Esophagus squamous epithelium (tissue), 5 donors: ENCODE measurements at regions of chr6 and their contacts with region 1.

Region 1: DNA sequence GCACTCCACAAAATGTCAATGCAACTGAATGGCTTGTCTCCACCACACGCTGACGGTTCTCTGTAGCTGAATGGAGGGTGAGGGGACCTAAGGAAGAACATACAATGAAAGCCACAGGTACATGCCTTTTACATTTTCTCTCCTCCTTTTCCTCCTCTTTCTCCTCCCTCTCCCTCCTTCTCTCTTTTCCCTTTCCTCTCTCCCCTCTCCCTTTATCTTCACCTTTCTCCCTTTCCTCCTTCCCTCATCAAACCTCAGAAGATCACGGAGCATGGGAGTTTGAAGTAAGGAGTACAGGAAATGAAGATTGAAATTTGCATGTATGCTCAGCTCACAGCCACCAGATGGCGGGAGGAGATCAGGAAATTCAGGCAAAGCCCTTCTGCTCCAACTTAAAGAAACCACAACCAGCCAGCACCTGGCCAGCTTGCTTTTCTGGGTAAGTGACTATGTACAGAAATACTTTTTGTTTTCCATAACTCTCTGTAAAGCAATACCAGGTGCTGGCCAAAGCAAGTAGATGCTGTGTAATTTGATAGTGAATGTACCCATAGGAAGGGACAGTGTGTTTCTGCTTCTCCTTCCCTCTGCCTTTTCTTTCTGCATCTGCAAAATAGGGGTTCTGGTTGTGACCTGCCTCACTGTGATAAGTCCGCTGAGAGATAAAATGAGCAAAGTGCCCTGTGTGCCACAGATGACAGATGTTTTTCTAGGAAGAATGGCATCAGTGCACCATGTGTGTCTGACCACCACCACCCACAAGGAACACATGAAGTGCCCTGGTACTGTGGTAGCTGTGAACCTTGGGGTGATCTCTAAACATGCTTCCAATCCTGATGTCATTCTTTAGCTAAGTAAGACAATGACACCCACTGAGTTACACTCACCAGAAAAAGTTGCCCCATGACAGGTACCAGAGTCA is 18.6 kb upstream of the FOXO3 start:
- DNase-seq: no peak
- H3K4me3 ChIP-seq: peak overlapping the region in 1 of 4 donors; percentile 23
- H3K27ac ChIP-seq: no peak overlapping the region
- H3K4me1 ChIP-seq: peaks cover 0 to 18% (median 6%) of the 10 kb centered on the region in 3 donors
- H3K27me3 ChIP-seq: no peaks in the 10 kb centered on the region
- CTCF ChIP-seq: peak; percentile 75 to 96 (median 90)
- POLR2A ChIP-seq: no peak

Region 2: GRCh38 chr6:108453597-108454185 is 88.4 kb before region 1 on chr6:
- intact Hi-C with region 1: no loop called
- DNase-seq: no peak
- H3K4me3 ChIP-seq: no peak overlapping the region
- H3K27ac ChIP-seq: peak overlapping the region in 1 of 4 donors; percentile 19
- H3K4me1 ChIP-seq: no peaks in the 10 kb centered on the region
- H3K27me3 ChIP-seq: no peaks in the 10 kb centered on the region
- CTCF ChIP-seq: no peak
- POLR2A ChIP-seq: no peak

Region 3: GRCh38 chr6:108497883-108498282 is 44.2 kb before region 1 on chr6:
- intact Hi-C with region 1: no loop called
- DNase-seq: no peak
- H3K4me3 ChIP-seq: no peak overlapping the region
- H3K27ac ChIP-seq: no peak overlapping the region
- H3K4me1 ChIP-seq: no peaks in the 10 kb centered on the region
- H3K27me3 ChIP-seq: no peaks in the 10 kb centered on the region
- CTCF ChIP-seq: peak in 4 of 6 experiments; percentile 21 to 58 (median 30)
- POLR2A ChIP-seq: no peak

Region 4: GRCh38 chr6:108661430-108661829 is 119.3 kb after region 1 on chr6:
- intact Hi-C with region 1: no loop called
- DNase-seq: no peak
- H3K4me3 ChIP-seq: no peak overlapping the region
- H3K27ac ChIP-seq: no peak overlapping the region
- H3K4me1 ChIP-seq: peaks cover 4 to 58% (median 24%) of the 10 kb centered on the region in 3 donors
- H3K27me3 ChIP-seq: no peaks in the 10 kb centered on the region
- CTCF ChIP-seq: no peak
- POLR2A ChIP-seq: no peak

Region 5: GRCh38 chr6:108755257-108756240 is 213.4 kb after region 1 on chr6:
- intact Hi-C with region 1: no loop called
- DNase-seq: no peak
- H3K4me3 ChIP-seq: no peak overlapping the region
- H3K27ac ChIP-seq: no peak overlapping the region
- H3K4me1 ChIP-seq: peaks cover 0 to 10% (median 0%) of the 10 kb centered on the region in 3 donors
- H3K27me3 ChIP-seq: no peaks in the 10 kb centered on the region
- CTCF ChIP-seq: no peak
- POLR2A ChIP-seq: no peak

Region 6: DNA sequence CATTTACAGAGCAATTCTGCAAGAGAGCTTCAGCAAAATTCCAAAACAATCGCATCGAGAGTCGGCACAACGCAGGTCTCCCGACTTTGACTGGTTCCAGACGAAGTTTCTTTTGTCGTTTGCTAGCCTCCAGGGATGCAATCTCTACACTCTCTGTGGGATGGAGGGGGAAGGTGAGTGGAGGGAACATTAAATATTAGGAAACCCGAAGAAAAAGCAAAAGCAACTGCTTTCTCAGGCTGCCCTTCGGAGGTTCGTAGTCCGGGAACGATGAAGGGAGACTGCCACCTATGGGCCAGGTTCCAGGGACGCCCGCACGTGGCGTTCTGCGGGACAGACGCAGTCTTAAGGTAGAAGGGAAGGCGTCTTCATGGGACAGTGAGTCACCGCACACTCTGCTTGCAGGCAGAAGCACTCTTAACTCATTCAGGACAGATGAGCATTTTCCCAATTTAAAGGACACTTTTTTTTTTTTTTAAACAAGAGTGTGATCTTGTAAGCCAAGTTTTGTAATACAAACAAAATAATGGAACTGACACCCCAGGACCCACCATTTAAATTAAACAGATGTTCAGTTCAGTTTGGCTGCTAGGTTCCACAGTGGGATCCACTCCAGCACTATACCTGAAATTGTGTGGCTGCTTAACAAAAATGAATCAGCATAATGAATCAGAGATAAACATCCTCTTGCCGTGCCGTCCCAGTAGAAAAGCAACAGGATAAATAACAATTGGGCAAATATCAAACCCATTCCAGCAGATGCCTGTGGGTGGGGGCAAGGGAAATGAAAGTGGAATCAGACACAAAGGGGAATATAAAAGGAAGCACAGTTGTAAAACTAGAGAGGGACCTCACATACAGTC is 240.3 kb after region 1 on chr6:
- intact Hi-C with region 1: loop called (anchors 5 kb)
- DNase-seq: no peak
- H3K4me3 ChIP-seq: peak overlapping the region; percentile 31 to 64 (median 52)
- H3K27ac ChIP-seq: peak overlapping the region in 3 of 4 donors; percentile 18 to 67 (median 62)
- H3K4me1 ChIP-seq: peaks cover 0 to 21% (median 5%) of the 10 kb centered on the region in 3 donors
- H3K27me3 ChIP-seq: no peaks in the 10 kb centered on the region
- CTCF ChIP-seq: peak; percentile 68 to 86 (median 80)
- POLR2A ChIP-seq: no peak

Region 7: DNA sequence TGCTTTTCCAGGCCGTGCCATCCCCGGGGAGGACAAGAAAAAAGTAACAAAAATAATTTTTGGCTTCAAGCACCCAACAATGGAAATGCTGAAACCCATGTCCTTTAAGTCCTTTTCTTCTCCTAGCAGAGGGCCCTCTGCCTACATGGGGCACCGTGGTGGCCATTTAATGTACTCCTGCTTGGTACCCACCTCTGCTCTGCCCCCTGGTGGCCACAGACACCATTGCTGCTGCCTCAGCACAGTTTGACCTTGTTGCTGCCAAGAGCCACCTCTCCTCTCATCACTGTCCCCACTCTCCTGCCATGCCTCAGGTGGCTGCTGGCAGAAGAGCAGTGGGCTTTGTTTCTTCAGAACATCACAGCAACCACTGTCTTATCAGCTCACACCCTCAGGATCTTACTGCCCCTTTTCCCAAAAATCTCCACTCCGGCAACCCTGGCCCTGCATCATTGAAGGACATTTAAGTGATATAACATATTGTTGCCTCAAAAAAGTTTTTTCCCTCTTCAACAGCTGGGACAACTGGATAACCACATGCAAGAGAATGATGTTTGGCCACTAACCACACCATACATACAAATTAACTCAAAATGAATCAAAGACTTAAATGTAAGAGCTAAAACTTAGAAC is 293.2 kb after region 1 on chr6:
- intact Hi-C with region 1: loop called (anchors 5 kb)
- DNase-seq: peak; percentile 35
- H3K4me3 ChIP-seq: no peak overlapping the region
- H3K27ac ChIP-seq: peak overlapping the region in 1 of 4 donors; percentile 7
- H3K4me1 ChIP-seq: peaks cover 0 to 30% (median 0%) of the 10 kb centered on the region in 3 donors
- H3K27me3 ChIP-seq: no peaks in the 10 kb centered on the region
- CTCF ChIP-seq: peak; percentile 93 to 97 (median 96)
- POLR2A ChIP-seq: no peak

Region 8: DNA sequence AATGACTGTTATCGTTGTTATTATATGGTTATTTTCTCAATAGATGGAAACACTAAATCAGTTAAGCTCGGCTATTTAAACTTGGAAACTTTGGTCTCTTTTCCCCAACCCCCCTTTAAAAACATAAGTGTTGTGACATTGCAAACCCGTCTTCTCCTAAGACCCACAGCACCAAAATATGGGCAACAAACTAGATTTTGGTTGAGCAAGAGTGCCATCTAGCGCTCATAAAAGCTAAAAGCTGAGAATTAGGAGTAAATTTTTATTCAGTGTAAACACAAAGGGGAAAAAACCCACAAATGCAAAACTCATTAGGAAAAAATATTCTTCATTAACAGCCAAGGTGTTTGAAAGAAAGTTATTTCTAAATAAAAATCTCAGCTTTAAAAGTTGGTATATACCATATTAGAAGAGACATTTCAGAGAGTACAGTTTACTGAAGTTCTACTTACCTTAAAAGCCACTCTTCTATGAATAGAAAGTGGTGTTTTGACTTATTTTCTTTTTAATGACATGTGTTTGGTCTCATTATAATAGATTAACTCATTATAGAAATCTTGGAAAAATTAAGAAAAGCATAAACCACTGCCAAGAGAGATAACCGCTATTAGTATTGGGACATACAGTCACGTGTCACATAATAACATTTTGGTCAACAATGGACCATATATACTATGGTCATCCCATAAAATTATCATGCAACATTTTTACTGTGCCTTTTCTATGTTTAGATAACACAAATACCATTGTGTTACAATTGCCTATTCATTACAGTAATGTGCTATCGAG is 531.4 kb after region 1 on chr6:
- intact Hi-C with region 1: loop called (anchors 10 kb)
- DNase-seq: no peak
- H3K4me3 ChIP-seq: no peak overlapping the region
- H3K27ac ChIP-seq: no peak overlapping the region
- H3K4me1 ChIP-seq: peaks cover 0 to 26% (median 2%) of the 10 kb centered on the region in 3 donors
- H3K27me3 ChIP-seq: no peaks in the 10 kb centered on the region
- CTCF ChIP-seq: peak; percentile 40 to 72 (median 58)
- POLR2A ChIP-seq: no peak